Heart right ventricle (tissue), 16 donors: ENCODE measurements at regions of chr6 and their contacts with region 1.

Region 1: GRCh38 chr6:55953335-55953734 is 77.9 kb upstream of the BMP5 start:
- DNase-seq: no peak
- ATAC-seq: peak in 7 of 8 donors; percentile 45 to 78 (median 65)
- H3K4me3 ChIP-seq: peak overlapping the region in 8 of 10 donors; percentile 2 to 44 (median 28)
- H3K27ac ChIP-seq: no peak overlapping the region
- H3K4me1 ChIP-seq: peaks cover 0 to 14% (median 0%) of the 10 kb centered on the region in 9 donors
- H3K27me3 ChIP-seq: no peaks in the 10 kb centered on the region
- CTCF ChIP-seq: peak; percentile 9 to 59 (median 39)

Region 2: GRCh38 chr6:55276745-55277530 is 676.4 kb before region 1 on chr6:
- intact Hi-C with region 1: loop called in 7 of 10 experiments (anchors 2 to 10 kb)
- DNase-seq: peak; percentile 39 to 45
- ATAC-seq: peak in 7 of 8 donors; percentile 48 to 82 (median 79)
- H3K4me3 ChIP-seq: peak overlapping the region in 7 of 10 donors; percentile 3 to 33 (median 23)
- H3K27ac ChIP-seq: peak overlapping the region in 7 of 10 donors; percentile 4 to 62 (median 54)
- H3K4me1 ChIP-seq: peaks cover 0 to 12% (median 0%) of the 10 kb centered on the region in 9 donors
- H3K27me3 ChIP-seq: no peaks in the 10 kb centered on the region
- CTCF ChIP-seq: peak; percentile 15 to 71 (median 58)

Region 3: GRCh38 chr6:55286824-55287223 is 666.5 kb before region 1 on chr6:
- intact Hi-C with region 1: loop called in 2 of 10 experiments (anchors 10 kb)
- DNase-seq: no peak
- ATAC-seq: no peak
- H3K4me3 ChIP-seq: no peak overlapping the region
- H3K27ac ChIP-seq: no peak overlapping the region
- H3K4me1 ChIP-seq: no peaks in the 10 kb centered on the region
- H3K27me3 ChIP-seq: no peaks in the 10 kb centered on the region
- CTCF ChIP-seq: no peak

Region 4: GRCh38 chr6:55293116-55293515 is 660.2 kb before region 1 on chr6:
- intact Hi-C with region 1: loop called in 2 of 10 experiments (anchors 10 kb)
- DNase-seq: no peak
- ATAC-seq: no peak
- H3K4me3 ChIP-seq: no peak overlapping the region
- H3K27ac ChIP-seq: no peak overlapping the region
- H3K4me1 ChIP-seq: no peaks in the 10 kb centered on the region
- H3K27me3 ChIP-seq: no peaks in the 10 kb centered on the region
- CTCF ChIP-seq: peak in 2 of 9 donors; percentile 24 to 31

Region 5: DNA sequence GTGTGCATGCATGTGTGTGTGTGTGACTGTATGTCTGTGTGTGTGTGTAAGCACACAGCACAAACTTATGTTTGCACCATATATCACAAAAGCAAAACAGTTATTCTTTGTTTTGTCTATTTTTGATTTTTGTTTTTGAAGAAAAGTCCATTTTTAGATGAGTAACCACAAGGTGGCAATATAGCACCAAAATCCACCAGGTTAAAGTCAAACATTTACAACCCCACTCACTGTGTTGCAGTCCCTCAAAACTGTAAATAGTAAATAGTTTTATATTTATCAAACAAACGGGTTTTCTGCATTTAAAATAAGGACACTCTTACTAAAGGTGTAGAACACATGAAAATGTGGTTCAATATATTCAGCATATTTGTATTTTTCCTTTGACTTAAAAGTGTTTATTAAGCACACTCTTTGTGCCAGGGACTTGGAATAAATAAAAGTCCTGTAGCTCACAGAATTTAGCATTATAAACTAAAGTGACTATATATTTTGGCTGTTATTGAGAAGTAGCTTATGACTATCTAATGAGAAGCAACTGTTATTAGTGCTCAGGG is 507.6 kb before region 1 on chr6:
- intact Hi-C with region 1: loop called in 8 of 10 experiments (anchors 5 to 10 kb)
- DNase-seq: no peak
- ATAC-seq: no peak
- H3K4me3 ChIP-seq: no peak overlapping the region
- H3K27ac ChIP-seq: no peak overlapping the region
- H3K4me1 ChIP-seq: peaks cover 0 to 8% (median 0%) of the 10 kb centered on the region in 9 donors
- H3K27me3 ChIP-seq: no peaks in the 10 kb centered on the region
- CTCF ChIP-seq: peak in 8 of 9 donors; percentile 36 to 67 (median 55)

Region 6: GRCh38 chr6:55617272-55617671 is 336.1 kb before region 1 on chr6:
- intact Hi-C with region 1: loop called in 1 of 10 experiments (anchors 5 kb)
- DNase-seq: no peak
- ATAC-seq: peak in 1 of 8 donors; percentile 65
- H3K4me3 ChIP-seq: no peak overlapping the region
- H3K27ac ChIP-seq: no peak overlapping the region
- H3K4me1 ChIP-seq: no peaks in the 10 kb centered on the region
- H3K27me3 ChIP-seq: no peaks in the 10 kb centered on the region
- CTCF ChIP-seq: peak; percentile 11 to 52 (median 36)